ENCODE measurements at regions of chr1 and their contacts with region 1.

Region 1: GRCh38 chr1:157193702-157194391 is 55.7 kb upstream of the ETV3 start:
- DNase-seq: peak; percentile 53 to 95
- H3K4me3 ChIP-seq: no peak overlapping the region
- H3K27ac ChIP-seq: no peak overlapping the region
- H3K4me1 ChIP-seq: peaks cover 0 to 2% (median under 1%) of the 10 kb centered on the region in 4 experiments; a peak in 1 of 7 replicates
- H3K27me3 ChIP-seq: no peaks in the 10 kb centered on the region; a peak in 2 of 7 replicates
- CTCF ChIP-seq: peak; percentile 67 to 84 (median 80)
- EP300 ChIP-seq: no peak
- POLR2A ChIP-seq: no peak
- RAD21 ChIP-seq: peak; percentile 80 to 81

Region 2: GRCh38 chr1:157170677-157171515 is 23.0 kb before region 1 on chr1:
- CTCF ChIA-PET with region 1: interaction called, 25 read pairs
- POLR2A ChIA-PET with region 1: no interaction called
- DNase-seq: peak in 1 of 2 experiments; percentile 91
- H3K4me3 ChIP-seq: no peak overlapping the region
- H3K27ac ChIP-seq: no peak overlapping the region
- H3K4me1 ChIP-seq: no peaks in the 10 kb centered on the region
- H3K27me3 ChIP-seq: no peaks in the 10 kb centered on the region
- CTCF ChIP-seq: peak; percentile 53 to 77 (median 61)
- EP300 ChIP-seq: no peak
- POLR2A ChIP-seq: no peak
- RAD21 ChIP-seq: peak; percentile 23 to 54; a peak in 2 of 4 replicates

Region 3: DNA sequence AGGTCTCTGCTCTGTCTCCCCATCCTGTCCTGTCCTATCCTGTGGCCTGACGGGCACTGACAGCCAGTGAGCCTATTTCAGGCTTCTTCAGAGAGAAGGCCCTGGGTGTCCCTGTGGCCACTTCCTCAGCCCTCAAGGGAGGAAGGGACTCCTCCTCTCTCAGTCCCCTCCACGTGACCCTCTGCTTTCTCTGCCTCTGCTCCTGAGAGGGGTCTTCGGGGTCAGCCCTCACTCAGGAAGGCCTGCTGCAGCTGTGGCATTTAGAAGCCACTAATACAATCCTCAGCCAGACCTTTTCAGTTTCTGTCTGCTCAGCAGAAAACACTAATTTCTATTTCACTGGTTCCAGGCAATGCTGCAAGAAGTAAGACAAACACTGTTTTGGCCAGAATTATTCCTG is 12.1 kb before region 1 on chr1:
- CTCF ChIA-PET with region 1: interaction called, 36 read pairs
- POLR2A ChIA-PET with region 1: no interaction called
- DNase-seq: no peak
- H3K4me3 ChIP-seq: no peak overlapping the region
- H3K27ac ChIP-seq: no peak overlapping the region
- H3K4me1 ChIP-seq: peaks cover 0 to 3% (median 2%) of the 10 kb centered on the region in 4 experiments; a peak in 2 of 7 replicates
- H3K27me3 ChIP-seq: 0 out of 7 replicates have a peak, but pooled peaks cover 0 to 3% (median 0%) of the 10 kb centered on the region in 4 experiments
- CTCF ChIP-seq: no peak
- EP300 ChIP-seq: no peak
- POLR2A ChIP-seq: no peak
- RAD21 ChIP-seq: no peak

Region 4: DNA sequence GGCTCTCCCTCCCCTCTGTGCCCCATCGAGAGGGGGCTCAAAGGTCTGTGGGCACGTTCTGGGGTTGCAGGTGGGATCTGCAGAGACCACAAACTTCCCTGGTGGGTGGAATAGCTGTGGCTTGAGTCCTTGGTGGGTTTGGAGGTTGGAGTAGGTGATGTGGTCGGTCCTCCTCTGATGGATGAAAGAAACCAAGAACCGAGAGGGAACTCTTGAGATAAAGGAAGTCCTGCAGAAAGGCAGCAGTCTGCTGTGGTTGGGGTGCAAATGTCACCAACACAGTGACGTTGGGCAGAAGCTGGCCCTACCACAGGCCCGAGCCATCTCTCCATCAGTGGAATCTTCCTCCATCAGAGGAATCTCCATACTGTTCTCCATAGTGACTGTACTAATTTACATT is 186.7 kb after region 1 on chr1:
- CTCF ChIA-PET with region 1: interaction called, 28 read pairs
- POLR2A ChIA-PET with region 1: no interaction called
- DNase-seq: no peak
- H3K4me3 ChIP-seq: no peak overlapping the region
- H3K27ac ChIP-seq: no peak overlapping the region
- H3K4me1 ChIP-seq: no peaks in the 10 kb centered on the region; a peak in 1 of 7 replicates
- H3K27me3 ChIP-seq: no peaks in the 10 kb centered on the region
- CTCF ChIP-seq: no peak
- EP300 ChIP-seq: no peak
- POLR2A ChIP-seq: no peak
- RAD21 ChIP-seq: no peak

Region 5: GRCh38 chr1:157431751-157432150 is 237.9 kb after region 1 on chr1:
- CTCF ChIA-PET with region 1: no interaction called
- POLR2A ChIA-PET with region 1: no interaction called
- DNase-seq: no peak
- H3K4me3 ChIP-seq: no peak overlapping the region
- H3K27ac ChIP-seq: no peak overlapping the region
- H3K4me1 ChIP-seq: no peaks in the 10 kb centered on the region
- H3K27me3 ChIP-seq: no peaks in the 10 kb centered on the region
- CTCF ChIP-seq: no peak
- EP300 ChIP-seq: no peak
- POLR2A ChIP-seq: no peak
- RAD21 ChIP-seq: no peak

Region 6: DNA sequence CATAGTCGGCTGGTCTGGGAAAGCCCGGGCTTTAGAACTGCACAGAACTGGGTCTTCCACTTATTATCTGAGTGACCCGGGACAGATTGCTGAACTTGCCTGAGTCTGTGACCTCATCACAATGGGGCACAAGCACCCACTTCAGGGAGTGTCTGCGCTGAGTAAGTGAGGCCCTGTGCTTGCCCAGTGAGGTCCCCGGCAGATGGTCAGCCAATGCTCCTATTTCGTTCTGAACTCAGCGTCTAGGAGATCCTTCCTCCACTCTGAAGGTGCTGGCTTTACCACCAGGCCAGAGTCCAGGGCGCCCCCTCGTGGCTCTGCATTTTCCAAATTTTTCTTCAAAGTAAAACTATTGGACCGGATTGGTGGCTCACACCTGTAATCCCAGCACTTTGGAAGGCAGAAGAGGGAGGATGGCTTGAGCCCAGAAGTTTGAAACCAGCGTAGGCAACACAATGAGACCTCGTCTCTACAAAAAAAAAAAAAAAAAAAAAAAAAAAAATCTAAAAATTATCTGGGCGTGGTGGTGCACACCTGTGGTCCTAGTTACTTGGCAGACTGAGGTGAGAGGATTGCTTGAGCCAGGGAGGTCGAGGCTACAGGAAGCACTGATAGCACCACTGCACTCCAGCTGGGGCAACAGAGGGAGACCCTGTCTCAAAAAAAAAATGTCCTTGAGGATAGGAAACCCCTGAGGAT is 296.8 kb after region 1 on chr1:
- CTCF ChIA-PET with region 1: interaction called, 28 read pairs
- POLR2A ChIA-PET with region 1: no interaction called
- DNase-seq: peak; percentile 43 to 95
- H3K4me3 ChIP-seq: no peak overlapping the region; a peak in 1 of 8 replicates
- H3K27ac ChIP-seq: no peak overlapping the region
- H3K4me1 ChIP-seq: peaks cover 0 to 3% (median 0%) of the 10 kb centered on the region in 4 experiments; a peak in 1 of 7 replicates
- H3K27me3 ChIP-seq: no peaks in the 10 kb centered on the region; a peak in 2 of 7 replicates
- CTCF ChIP-seq: peak; percentile 56 to 89 (median 68)
- EP300 ChIP-seq: no peak
- POLR2A ChIP-seq: no peak
- RAD21 ChIP-seq: peak; percentile 76 to 80

Measured in H1 (cell line).